ENCODE measurements at regions of chr11 and their contacts with region 1.

Region 1: GRCh38 chr11:8099291-8099899 is 18.4 kb downstream of the TUB start:
- DNase-seq: peak; percentile 73 to 81
- H3K4me3 ChIP-seq: no peak overlapping the region
- H3K27ac ChIP-seq: no peak overlapping the region
- H3K4me1 ChIP-seq: no peaks in the 10 kb centered on the region
- H3K27me3 ChIP-seq: no peaks in the 10 kb centered on the region
- CTCF ChIP-seq: peak; percentile 27 to 72 (median 64)
- POLR2A ChIP-seq: no peak

Region 2: GRCh38 chr11:8033305-8034105 is 65.9 kb before region 1 on chr11:
- intact Hi-C with region 1: loop called (anchors 10 kb)
- DNase-seq: peak; percentile 47 to 78
- H3K4me3 ChIP-seq: peak overlapping the region in 1 of 3 donors; percentile 23
- H3K27ac ChIP-seq: no peak overlapping the region
- H3K4me1 ChIP-seq: no peaks in the 10 kb centered on the region
- H3K27me3 ChIP-seq: no peaks in the 10 kb centered on the region
- CTCF ChIP-seq: peak; percentile 71 to 89 (median 75)
- POLR2A ChIP-seq: no peak